Gastrocnemius medialis (tissue), 4 donors: ENCODE measurements at regions of chr3 and their contacts with region 1.

Region 1: GRCh38 chr3:51498876-51499738 is 708 bp downstream of the DCAF1 start:
- DNase-seq: peak; percentile 89 to 93
- ATAC-seq: peak; percentile 77 to 78
- H3K4me3 ChIP-seq: peak overlapping the region; percentile 73 to 85 (median 76)
- H3K27ac ChIP-seq: peak overlapping the region; percentile 93 to 98 (median 96)
- H3K4me1 ChIP-seq: peaks cover 9% of the 10 kb centered on the region in 2 donors
- H3K27me3 ChIP-seq: no peaks in the 10 kb centered on the region
- CTCF ChIP-seq: no peak
- POLR2A ChIP-seq: peak; percentile 70

Region 2: GRCh38 chr3:50568947-50569749 is 930.0 kb before region 1 on chr3 and contains the start of gene HEMK1:
- in situ Hi-C with region 1: no loop called
- intact Hi-C with region 1: loop called (anchors 1 kb)
- DNase-seq: peak; percentile 97
- ATAC-seq: peak; percentile 77 to 78
- H3K4me3 ChIP-seq: peak within 1 kb of the TSS; percentile 81 to 92 (median 86)
- H3K27ac ChIP-seq: peak within 1 kb of the TSS; percentile 88 to 97 (median 92)
- H3K4me1 ChIP-seq: peaks cover 39 to 46% of the 10 kb centered on the region in 2 donors
- H3K27me3 ChIP-seq: no peaks in the 10 kb centered on the region
- CTCF ChIP-seq: peak in 3 of 5 experiments; percentile 11 to 20 (median 11)
- POLR2A ChIP-seq: peak; percentile 73 to 78
- total RNA-seq, gene HEMK1: 4.5 to 8.1 (median 7.5) TPM

Region 3: GRCh38 chr3:51391075-51391567 is 108.0 kb before region 1 on chr3 and contains the start of gene RBM15B:
- in situ Hi-C with region 1: loop called in 2 of 4 experiments (anchors 5 to 10 kb)
- intact Hi-C with region 1: loop called (anchors 1 kb)
- DNase-seq: peak; percentile 95 to 97
- ATAC-seq: peak; percentile 81 to 87
- H3K4me3 ChIP-seq: peak within 1 kb of the TSS; percentile 68 to 82 (median 76)
- H3K27ac ChIP-seq: peak within 1 kb of the TSS; percentile 77 to 94 (median 90)
- H3K4me1 ChIP-seq: peaks cover 50 to 60% of the 10 kb centered on the region in 2 donors
- H3K27me3 ChIP-seq: no peaks in the 10 kb centered on the region
- CTCF ChIP-seq: peak in 4 of 5 experiments; percentile 85 to 90 (median 88)
- POLR2A ChIP-seq: peak; percentile 79 to 85
- total RNA-seq, gene RBM15B: 4.9 to 13.7 (median 8.9) TPM

Region 4: DNA sequence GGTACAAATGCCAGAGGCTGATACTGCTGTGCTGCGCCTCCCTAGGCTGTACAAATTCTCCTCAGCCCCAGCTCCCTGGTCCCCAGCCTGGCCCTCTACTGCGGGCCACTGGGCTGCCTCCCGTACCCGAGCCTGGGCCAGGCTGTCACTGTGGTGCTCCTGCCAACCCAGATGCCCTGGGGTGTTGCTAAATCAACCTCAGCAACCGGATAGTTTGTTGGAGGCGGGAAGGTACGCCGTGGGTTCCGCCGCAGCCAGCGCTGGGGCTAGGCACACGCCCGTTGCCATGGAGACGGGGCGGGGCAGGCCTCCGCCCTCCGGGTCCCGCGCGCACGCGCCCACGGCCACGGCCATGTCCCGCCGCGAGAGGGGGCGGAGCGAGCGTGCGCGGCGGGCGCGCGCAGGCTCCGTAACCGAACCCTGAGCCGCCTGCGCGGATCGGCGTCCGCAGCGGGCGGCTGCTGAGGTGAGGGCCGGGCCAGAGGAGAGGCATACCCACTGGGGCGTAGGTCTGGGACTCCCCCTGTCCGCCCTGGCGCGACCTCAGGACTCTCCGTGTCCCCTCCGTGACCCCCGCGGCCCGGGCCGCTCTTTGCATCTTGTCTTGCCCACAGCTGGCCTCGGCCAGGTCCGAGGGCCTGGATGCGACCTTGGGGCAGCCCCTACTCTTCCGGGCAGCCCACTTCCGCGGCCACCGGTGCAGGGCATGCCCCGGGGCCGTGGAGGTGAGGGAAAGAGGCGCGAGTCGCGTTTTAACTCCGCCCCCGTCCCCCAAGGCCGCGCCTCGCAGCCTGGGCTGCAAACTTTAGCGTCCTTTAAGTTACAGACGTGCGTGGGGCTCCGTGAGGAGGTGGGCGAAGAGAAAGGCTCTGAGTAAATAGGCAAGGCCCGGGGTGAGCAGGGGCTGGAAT is 172.0 kb after region 1 on chr3 and contains the start of gene TEX264:
- in situ Hi-C with region 1: loop called in 2 of 4 experiments (anchors 5 kb)
- intact Hi-C with region 1: loop called (anchors 1 kb)
- DNase-seq: peak; percentile 87 to 95
- ATAC-seq: peak; percentile 81
- H3K4me3 ChIP-seq: peak within 1 kb of the TSS; percentile 75 to 99 (median 94)
- H3K27ac ChIP-seq: peak within 1 kb of the TSS; percentile 92 to 99 (median 96)
- H3K4me1 ChIP-seq: peaks cover 24 to 40% of the 10 kb centered on the region in 2 donors
- H3K27me3 ChIP-seq: no peaks in the 10 kb centered on the region
- CTCF ChIP-seq: no peak
- POLR2A ChIP-seq: peak; percentile 85 to 87
- total RNA-seq, gene TEX264: 43.9 to 83.5 (median 54.3) TPM

Region 5: GRCh38 chr3:51799879-51800749 is 301.0 kb after region 1 on chr3:
- in situ Hi-C with region 1: loop called (anchors 5 to 10 kb)
- intact Hi-C with region 1: loop called (anchors 2 kb)
- DNase-seq: no peak
- ATAC-seq: peak; percentile 49 to 54
- H3K4me3 ChIP-seq: no peak overlapping the region
- H3K27ac ChIP-seq: no peak overlapping the region
- H3K4me1 ChIP-seq: no peaks in the 10 kb centered on the region
- H3K27me3 ChIP-seq: peaks cover 0 to 2% (median 0%) of the 10 kb centered on the region in 3 donors
- CTCF ChIP-seq: peak; percentile 40 to 71 (median 45)
- POLR2A ChIP-seq: no peak